Esophagus muscularis mucosa (tissue), 4 donors: ENCODE measurements at regions of chr17 and their contacts with region 1.

Region 1: DNA sequence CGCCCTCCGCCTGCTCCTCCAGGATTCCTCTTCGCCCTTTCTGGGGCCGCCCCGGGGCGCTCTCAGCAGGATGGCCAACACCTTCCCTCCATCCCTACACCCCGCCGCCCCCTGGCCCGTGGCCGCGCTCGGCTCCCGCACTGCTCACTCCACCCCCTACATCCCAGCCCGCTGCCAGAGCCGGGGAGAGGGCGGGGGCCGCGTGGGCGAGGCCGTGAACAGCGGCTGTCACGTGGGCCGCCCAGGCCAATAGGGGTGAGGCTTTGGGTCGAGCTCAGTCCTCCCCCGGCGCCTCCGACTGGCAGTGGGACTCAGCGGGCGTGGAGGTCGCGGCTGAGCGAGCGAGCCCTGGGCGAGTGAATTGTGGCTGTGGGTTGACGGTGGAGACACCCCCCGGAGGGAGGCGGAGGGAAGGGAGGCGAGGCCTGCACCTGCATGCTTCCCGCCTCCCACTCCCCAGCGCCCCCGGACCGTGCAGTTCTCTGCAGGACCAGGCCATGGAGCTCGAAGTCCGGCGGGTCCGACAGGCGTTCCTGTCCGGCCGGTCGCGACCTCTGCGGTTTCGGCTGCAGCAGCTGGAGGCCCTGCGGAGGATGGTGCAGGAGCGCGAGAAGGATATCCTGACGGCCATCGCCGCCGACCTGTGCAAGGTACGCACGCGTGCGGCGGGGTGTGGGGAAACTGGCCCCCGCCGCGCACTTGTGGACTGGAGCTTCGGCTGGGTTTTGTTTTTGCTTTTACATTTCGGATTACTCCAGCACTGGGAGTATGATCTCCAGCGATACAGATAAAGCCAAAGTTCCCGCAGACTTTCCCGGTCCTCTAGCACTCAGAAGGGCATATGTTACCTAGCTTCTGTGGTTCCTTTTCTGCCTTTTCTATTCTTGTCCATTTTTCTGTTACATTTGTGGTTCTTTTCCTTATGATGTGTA is at the start of gene ALDH3A2:
- DNase-seq: peak; percentile 99
- H3K4me3 ChIP-seq: peak within 1 kb of the TSS; percentile 73 to 91 (median 78)
- H3K27ac ChIP-seq: peak within 1 kb of the TSS; percentile 96 to 98 (median 98)
- H3K4me1 ChIP-seq: peaks cover 35 to 74% (median 69%) of the 10 kb centered on the region in 4 donors
- H3K27me3 ChIP-seq: no peaks in the 10 kb centered on the region
- CTCF ChIP-seq: peak in 2 of 3 experiments; percentile 24 to 39
- EP300 ChIP-seq: no peak
- POLR2A ChIP-seq: peak; percentile 87
- total RNA-seq, gene ALDH3A2: 104 to 182 (median 115) TPM

Region 2: GRCh38 chr17:19377602-19378392 is 270.9 kb before region 1 on chr17:
- intact Hi-C with region 1: loop called (anchors 5 kb)
- DNase-seq: peak; percentile 99
- H3K4me3 ChIP-seq: peak overlapping the region; percentile 72 to 92 (median 90)
- H3K27ac ChIP-seq: peak overlapping the region; percentile 91 to 97 (median 94)
- H3K4me1 ChIP-seq: peaks cover 22 to 56% (median 51%) of the 10 kb centered on the region in 4 donors
- H3K27me3 ChIP-seq: no peaks in the 10 kb centered on the region
- CTCF ChIP-seq: peak in 2 of 3 experiments; percentile 6 to 12
- EP300 ChIP-seq: no peak
- POLR2A ChIP-seq: peak; percentile 25

Region 3: GRCh38 chr17:19513897-19514488 is 134.7 kb before region 1 on chr17:
- intact Hi-C with region 1: loop called (anchors 5 kb)
- DNase-seq: no peak
- H3K4me3 ChIP-seq: no peak overlapping the region
- H3K27ac ChIP-seq: peak overlapping the region in 3 of 4 donors; percentile 25 to 33 (median 30)
- H3K4me1 ChIP-seq: peaks cover 0 to 11% (median 2%) of the 10 kb centered on the region in 4 donors
- H3K27me3 ChIP-seq: no peaks in the 10 kb centered on the region
- CTCF ChIP-seq: peak; percentile 88 to 92 (median 92)
- EP300 ChIP-seq: no peak
- POLR2A ChIP-seq: no peak

Region 4: GRCh38 chr17:19579867-19580565 is 68.7 kb before region 1 on chr17:
- intact Hi-C with region 1: loop called (anchors 10 kb)
- DNase-seq: no peak
- H3K4me3 ChIP-seq: peak overlapping the region; percentile 54 to 62 (median 56)
- H3K27ac ChIP-seq: peak overlapping the region in 1 of 4 donors; percentile 23
- H3K4me1 ChIP-seq: peaks cover 0 to 13% (median 12%) of the 10 kb centered on the region in 4 donors
- H3K27me3 ChIP-seq: peaks cover 0 to 29% (median 5%) of the 10 kb centered on the region in 4 donors
- CTCF ChIP-seq: no peak
- EP300 ChIP-seq: no peak
- POLR2A ChIP-seq: no peak

Region 5: DNA sequence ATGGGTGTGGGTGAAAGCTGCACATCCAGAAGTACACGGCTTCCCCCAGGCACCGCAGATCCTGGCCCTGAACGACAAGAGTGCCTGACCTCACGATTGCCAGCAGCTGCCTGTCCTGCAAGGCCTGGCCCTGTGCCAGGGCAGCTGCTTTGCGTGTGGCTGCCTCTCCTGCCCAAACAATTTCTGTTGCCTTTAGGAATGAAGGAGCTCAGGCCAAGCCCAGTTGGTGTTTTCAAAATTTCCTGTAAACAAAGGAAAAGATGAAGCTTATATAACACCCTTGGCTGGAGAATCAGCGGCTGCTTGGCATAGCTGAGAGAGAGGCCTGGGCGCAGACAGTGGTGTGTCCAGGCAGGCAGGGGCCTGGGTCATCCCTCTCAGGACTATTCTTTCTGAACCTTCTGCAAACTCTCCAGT is 79.3 kb after region 1 on chr17:
- intact Hi-C with region 1: loop called (anchors 5 kb)
- DNase-seq: peak; percentile 96
- H3K4me3 ChIP-seq: no peak overlapping the region
- H3K27ac ChIP-seq: peak overlapping the region; percentile 83 to 92 (median 86)
- H3K4me1 ChIP-seq: peaks cover 33 to 55% (median 53%) of the 10 kb centered on the region in 4 donors
- H3K27me3 ChIP-seq: no peaks in the 10 kb centered on the region
- CTCF ChIP-seq: no peak
- EP300 ChIP-seq: no peak
- POLR2A ChIP-seq: no peak

Region 6: GRCh38 chr17:19753049-19753444 is 104.3 kb after region 1 on chr17:
- intact Hi-C with region 1: loop called (anchors 5 kb)
- DNase-seq: no peak
- H3K4me3 ChIP-seq: no peak overlapping the region
- H3K27ac ChIP-seq: peak overlapping the region in 3 of 4 donors; percentile 30 to 54 (median 53)
- H3K4me1 ChIP-seq: peaks cover 0 to 14% (median 10%) of the 10 kb centered on the region in 4 donors
- H3K27me3 ChIP-seq: peaks cover 0 to 9% (median 0%) of the 10 kb centered on the region in 4 donors
- CTCF ChIP-seq: no peak
- EP300 ChIP-seq: no peak
- POLR2A ChIP-seq: no peak

Region 7: DNA sequence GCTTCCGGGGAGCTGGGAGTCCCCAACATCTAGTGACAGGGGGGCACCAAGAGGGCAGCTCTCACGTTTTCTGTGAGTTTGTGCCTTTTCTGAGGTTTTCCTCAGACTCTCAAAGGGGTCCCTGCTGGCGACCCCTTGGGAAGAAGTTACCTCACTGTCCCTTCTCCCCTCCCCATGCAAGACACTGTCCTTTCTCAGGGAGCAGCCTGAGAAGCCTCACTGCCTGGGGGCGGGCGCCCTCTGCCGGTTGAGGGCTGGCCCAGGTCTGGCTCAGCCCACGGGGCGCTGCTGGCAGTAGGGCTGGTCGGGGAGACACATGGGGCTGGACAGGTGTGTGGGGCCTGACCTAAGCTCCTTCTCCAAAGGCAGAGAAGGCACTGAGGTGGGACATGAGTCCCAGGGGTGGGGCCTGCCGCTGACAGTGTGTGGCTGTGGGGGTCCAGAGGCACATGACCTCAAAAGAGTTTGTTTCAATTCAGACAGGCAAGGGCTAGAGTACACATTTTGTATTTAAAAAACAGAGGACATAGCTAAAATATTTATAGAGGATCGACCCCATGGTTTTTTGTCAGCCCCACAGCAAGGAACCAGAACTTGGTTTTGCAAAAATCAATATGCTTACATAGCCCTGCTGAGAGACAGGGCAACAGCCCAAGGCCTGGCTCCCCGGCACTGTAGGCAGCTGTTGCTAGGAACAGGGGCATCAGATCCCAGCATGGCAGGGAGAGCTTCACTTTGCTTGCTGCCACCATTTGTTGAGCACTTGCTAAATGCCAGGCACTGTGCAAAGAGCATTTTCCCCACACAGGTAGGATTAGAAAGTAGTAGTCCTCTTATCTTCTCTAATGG is 117.9 kb after region 1 on chr17:
- intact Hi-C with region 1: loop called (anchors 5 kb)
- DNase-seq: peak; percentile 92
- H3K4me3 ChIP-seq: no peak overlapping the region
- H3K27ac ChIP-seq: no peak overlapping the region
- H3K4me1 ChIP-seq: peaks cover 0 to 31% (median 18%) of the 10 kb centered on the region in 4 donors
- H3K27me3 ChIP-seq: no peaks in the 10 kb centered on the region
- CTCF ChIP-seq: peak in 2 of 3 experiments; percentile 91 to 95
- EP300 ChIP-seq: no peak
- POLR2A ChIP-seq: no peak